ENCODE measurements at regions of chr6 and their contacts with region 1.

Region 1: GRCh38 chr6:83884523-83884922 is 25.0 kb downstream of the CYB5R4 start:
- DNase-seq: no peak
- H3K4me3 Mint-ChIP-seq: no peak overlapping the region
- H3K27ac Mint-ChIP-seq: no peak overlapping the region
- H3K4me1 Mint-ChIP-seq: no peaks in the 10 kb centered on the region
- H3K27me3 Mint-ChIP-seq: no peaks in the 10 kb centered on the region
- CTCF ChIP-seq: peak; percentile 51

Region 2: GRCh38 chr6:84417261-84417660 is 532.7 kb after region 1 on chr6:
- CTCF ChIA-PET with region 1: no interaction called
- intact Hi-C with region 1: loop called (anchors 5 kb)
- DNase-seq: no peak
- H3K4me3 Mint-ChIP-seq: no peak overlapping the region
- H3K27ac Mint-ChIP-seq: no peak overlapping the region
- H3K4me1 Mint-ChIP-seq: peaks cover 6% of the 10 kb centered on the region
- H3K27me3 Mint-ChIP-seq: peaks cover 26% of the 10 kb centered on the region
- CTCF ChIP-seq: no peak

Region 3: GRCh38 chr6:84462698-84463097 is 578.2 kb after region 1 on chr6:
- CTCF ChIA-PET with region 1: no interaction called
- intact Hi-C with region 1: no loop called
- DNase-seq: no peak
- H3K4me3 Mint-ChIP-seq: no peak overlapping the region
- H3K27ac Mint-ChIP-seq: peak overlapping the region; percentile 32
- H3K4me1 Mint-ChIP-seq: peaks cover 42% of the 10 kb centered on the region
- H3K27me3 Mint-ChIP-seq: no peaks in the 10 kb centered on the region
- CTCF ChIP-seq: no peak